PC-3 (cell line): ENCODE measurements at regions of chr12 and their contacts with region 1.

Region 1: DNA sequence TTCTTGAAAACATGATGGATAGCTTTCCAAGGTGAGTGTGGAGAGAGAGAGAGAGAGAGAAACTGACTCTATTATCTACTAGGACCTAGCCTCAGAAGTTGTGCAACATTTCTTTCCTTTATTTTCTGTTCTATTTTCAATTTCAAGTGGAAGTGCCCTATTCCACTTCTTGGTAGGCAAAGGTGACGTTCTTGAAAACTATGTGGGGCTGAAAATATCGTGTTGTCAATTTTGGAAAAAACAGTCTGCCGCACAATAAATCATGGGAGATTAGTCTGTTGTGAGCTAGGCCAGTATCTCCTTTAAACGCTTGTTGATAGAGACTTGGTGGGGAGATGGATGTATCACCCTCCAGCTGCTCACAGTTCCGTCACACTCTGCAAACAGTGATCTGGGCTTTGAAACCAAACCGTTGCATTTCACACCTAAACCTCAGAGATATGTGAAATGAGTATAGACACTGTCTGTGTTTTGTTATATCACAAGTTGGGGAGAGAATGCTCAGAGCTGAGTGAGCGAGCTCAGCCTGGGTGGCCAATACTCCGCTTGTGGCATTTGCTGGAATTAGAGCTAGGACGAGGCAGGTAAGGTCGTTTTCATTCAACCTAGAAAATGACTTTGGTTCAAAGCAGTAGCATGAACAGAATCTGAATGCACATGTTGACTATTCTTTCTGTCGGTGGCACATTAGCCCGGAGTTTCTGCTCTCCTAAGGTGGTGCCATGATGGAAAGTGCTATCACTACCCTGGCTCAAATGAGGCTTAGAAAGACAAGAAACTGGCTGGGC is 75.1 kb upstream of the ST8SIA1 start:
- DNase-seq: no peak
- ATAC-seq: no peak
- H3K4me3 ChIP-seq: no peak overlapping the region
- H3K27ac ChIP-seq: peak overlapping the region; percentile 79
- H3K4me1 ChIP-seq: peaks cover 31% of the 10 kb centered on the region
- H3K27me3 ChIP-seq: no peaks in the 10 kb centered on the region
- CTCF ChIP-seq: no peak

Region 2: GRCh38 chr12:22083167-22083566 is 326.4 kb before region 1 on chr12:
- CTCF ChIA-PET with region 1: no interaction called
- POLR2A ChIA-PET with region 1: no interaction called
- intact Hi-C with region 1: no loop called
- DNase-seq: peak; percentile 46
- ATAC-seq: no peak
- H3K4me3 ChIP-seq: no peak overlapping the region
- H3K27ac ChIP-seq: no peak overlapping the region
- H3K4me1 ChIP-seq: peaks cover 12% of the 10 kb centered on the region; the same call in 1 of the 2 replicates
- H3K27me3 ChIP-seq: no peaks in the 10 kb centered on the region
- CTCF ChIP-seq: peak; percentile 62

Region 3: GRCh38 chr12:22275846-22276245 is 133.7 kb before region 1 on chr12:
- CTCF ChIA-PET with region 1: no interaction called
- POLR2A ChIA-PET with region 1: no interaction called
- intact Hi-C with region 1: loop called (anchors 10 kb)
- DNase-seq: peak; percentile 95
- ATAC-seq: peak; percentile 100
- H3K4me3 ChIP-seq: no peak overlapping the region; the same call in 1 of the 2 replicates
- H3K27ac ChIP-seq: peak overlapping the region; percentile 64
- H3K4me1 ChIP-seq: peaks cover 13% of the 10 kb centered on the region
- H3K27me3 ChIP-seq: no peaks in the 10 kb centered on the region
- CTCF ChIP-seq: no peak